ENCODE measurements at regions of chr18 and their contacts with region 1.

Region 1: GRCh38 chr18:48951448-48952286 is 902 bp upstream of the SMAD7 start:
- H3K4me3 ChIP-seq: peak overlapping the region; percentile 91
- H3K27ac ChIP-seq: peak overlapping the region; percentile 100
- H3K4me1 ChIP-seq: peaks cover 18% of the 10 kb centered on the region
- CTCF ChIP-seq: peak; percentile 63; the same call in 1 of the 2 replicates

Region 2: DNA sequence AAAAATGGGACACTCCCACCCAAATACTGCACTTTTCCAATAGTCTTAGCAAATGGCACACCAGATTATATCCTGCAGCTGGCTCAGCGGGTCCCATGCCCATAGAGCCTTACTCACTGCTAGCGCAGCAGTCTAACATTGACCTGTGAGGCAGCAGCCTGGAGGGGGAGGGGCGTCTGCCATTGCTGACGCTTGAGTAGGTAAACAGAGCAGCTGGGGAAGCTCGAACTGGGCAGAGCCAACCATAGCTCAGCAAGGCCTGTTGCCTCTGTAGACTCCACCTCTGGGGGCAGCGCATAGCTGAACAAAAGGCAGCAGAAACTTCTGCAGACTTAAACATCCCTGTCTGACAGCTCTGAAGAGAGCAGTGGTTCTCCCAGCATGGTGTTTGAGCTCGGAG is 302.4 kb before region 1 on chr18:
- CTCF ChIA-PET with region 1: no interaction called
- POLR2A ChIA-PET with region 1: no interaction called
- H3K4me3 ChIP-seq: no peak overlapping the region
- H3K27ac ChIP-seq: no peak overlapping the region
- H3K4me1 ChIP-seq: no peaks in the 10 kb centered on the region
- CTCF ChIP-seq: 0 out of 2 replicates have a peak, but pooled peaks have one; percentile 12

Region 3: DNA sequence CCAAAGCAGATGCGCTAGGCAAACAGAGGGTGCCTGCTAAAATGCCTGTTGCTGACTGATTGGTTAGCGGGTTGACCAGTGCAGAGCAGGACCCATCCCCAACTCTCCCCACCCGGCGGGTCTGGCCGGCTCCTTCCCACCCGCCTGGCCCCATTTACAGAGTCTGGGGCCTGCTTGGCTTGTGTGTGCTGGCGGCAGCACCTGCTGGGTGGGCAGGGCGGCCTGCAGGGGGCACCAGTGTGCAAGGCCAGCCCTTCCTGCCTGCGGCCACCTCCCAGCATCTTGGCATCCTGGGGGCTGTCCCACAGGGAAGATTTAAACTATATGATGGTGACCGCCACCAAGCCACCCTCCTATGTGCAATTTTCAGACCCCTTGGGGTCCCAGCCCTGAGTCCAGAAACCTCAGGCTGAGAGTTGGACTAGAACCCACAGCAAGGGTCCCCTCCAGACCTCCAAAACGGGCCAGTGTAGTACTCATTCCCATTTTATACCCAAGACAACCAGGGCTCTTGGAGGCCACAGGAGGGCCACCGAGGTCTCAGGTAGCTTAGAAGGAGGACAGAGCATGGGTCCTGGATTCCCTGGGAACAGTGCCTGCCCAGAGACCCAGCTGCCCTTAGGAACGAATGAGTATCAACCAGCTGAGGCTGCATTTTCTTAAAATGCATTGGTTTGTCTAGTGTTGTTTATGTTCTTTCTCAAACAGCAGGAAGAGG is 174.5 kb before region 1 on chr18:
- CTCF ChIA-PET with region 1: interaction called, 12 read pairs
- POLR2A ChIA-PET with region 1: interaction called, 4 read pairs
- H3K4me3 ChIP-seq: no peak overlapping the region
- H3K27ac ChIP-seq: peak overlapping the region; percentile 17; the same call in 1 of the 2 replicates
- H3K4me1 ChIP-seq: peaks cover 11% of the 10 kb centered on the region; the same call in 1 of the 2 replicates
- CTCF ChIP-seq: peak; percentile 93

Region 4: GRCh38 chr18:48940854-48941611 is 10.6 kb before region 1 on chr18:
- CTCF ChIA-PET with region 1: interaction called, 4 read pairs
- POLR2A ChIA-PET with region 1: interaction called, 33 read pairs
- H3K4me3 ChIP-seq: peak overlapping the region; percentile 25
- H3K27ac ChIP-seq: peak overlapping the region; percentile 99
- H3K4me1 ChIP-seq: peaks cover 74% of the 10 kb centered on the region
- CTCF ChIP-seq: no peak

Region 5: GRCh38 chr18:48975649-48976204 is 24.1 kb after region 1 on chr18:
- CTCF ChIA-PET with region 1: interaction called, 3 read pairs
- POLR2A ChIA-PET with region 1: interaction called, 39 read pairs
- H3K4me3 ChIP-seq: peak overlapping the region; percentile 41
- H3K27ac ChIP-seq: peak overlapping the region; percentile 97
- H3K4me1 ChIP-seq: peaks cover 12% of the 10 kb centered on the region
- CTCF ChIP-seq: no peak

Region 6: GRCh38 chr18:48997985-48998831 is 46.5 kb after region 1 on chr18:
- CTCF ChIA-PET with region 1: interaction called, 6 read pairs
- POLR2A ChIA-PET with region 1: interaction called, 252 read pairs
- H3K4me3 ChIP-seq: peak overlapping the region; percentile 5
- H3K27ac ChIP-seq: peak overlapping the region; percentile 73
- H3K4me1 ChIP-seq: peaks cover 38% of the 10 kb centered on the region
- CTCF ChIP-seq: no peak

Region 7: DNA sequence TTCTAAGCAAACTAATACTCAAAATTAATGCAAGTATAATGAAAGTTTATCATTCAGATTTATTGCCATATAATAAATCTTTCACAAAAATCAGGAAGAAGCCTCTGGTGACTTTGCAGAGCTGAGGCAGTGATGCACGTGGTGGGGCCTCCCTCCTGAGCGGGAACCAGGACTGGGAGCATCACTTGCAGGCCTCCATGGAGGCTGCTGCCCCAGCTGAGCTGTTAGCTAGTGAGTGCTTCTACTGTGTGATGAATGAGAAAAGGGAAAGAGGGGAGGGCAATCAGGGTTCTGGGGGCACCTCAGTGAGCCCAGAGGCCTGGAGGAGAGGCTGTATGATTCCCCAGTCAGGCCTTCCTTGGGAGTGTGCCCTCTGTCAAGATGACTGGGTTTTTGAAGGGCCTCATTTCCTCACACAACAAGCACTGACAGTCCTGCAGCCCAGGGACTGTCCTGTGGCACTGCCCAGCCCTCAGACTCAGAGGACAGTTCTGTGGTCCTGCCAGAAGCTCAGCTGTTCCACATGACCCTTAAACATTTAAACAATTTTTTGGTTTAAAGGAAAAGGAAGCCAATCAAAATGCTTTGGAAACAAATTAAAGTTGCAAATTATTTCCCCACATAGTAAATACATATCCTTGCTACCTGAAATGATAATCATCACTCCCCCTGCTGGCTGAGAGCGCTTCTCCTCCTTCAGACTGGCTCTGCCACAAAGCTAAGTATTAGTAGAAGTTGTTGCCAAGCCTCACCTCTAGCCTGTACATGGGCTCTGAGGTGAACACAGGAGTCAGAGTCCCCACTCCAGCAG is 90.0 kb after region 1 on chr18:
- CTCF ChIA-PET with region 1: interaction called, 6 read pairs
- POLR2A ChIA-PET with region 1: interaction called, 17 read pairs
- H3K4me3 ChIP-seq: no peak overlapping the region
- H3K27ac ChIP-seq: 0 out of 2 replicates have a peak overlapping the region, but pooled peaks have one; percentile 5
- H3K4me1 ChIP-seq: no peaks in the 10 kb centered on the region
- CTCF ChIP-seq: no peak; the same call in 1 of the 2 replicates

Region 8: DNA sequence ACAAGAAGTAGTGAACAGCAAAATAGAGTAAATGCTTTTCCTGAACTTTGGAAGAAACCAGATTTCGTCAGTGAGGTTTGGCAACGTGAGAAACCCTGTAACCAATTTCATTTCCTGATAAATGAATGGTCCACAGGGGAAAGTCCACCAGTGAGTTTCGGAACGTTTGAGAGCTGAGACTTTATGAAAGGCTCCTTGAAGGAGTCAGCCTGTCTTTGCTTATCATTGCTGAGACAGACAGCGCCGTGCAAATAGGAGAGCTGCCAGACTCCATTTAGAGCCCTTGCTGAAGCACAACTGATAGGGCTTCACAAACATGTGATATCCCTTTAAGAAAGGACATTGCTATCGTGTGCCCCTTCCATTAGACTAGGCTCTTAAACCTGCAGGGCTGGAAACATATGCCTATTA is 120.9 kb after region 1 on chr18:
- CTCF ChIA-PET with region 1: no interaction called
- POLR2A ChIA-PET with region 1: no interaction called
- H3K4me3 ChIP-seq: no peak overlapping the region
- H3K27ac ChIP-seq: no peak overlapping the region
- H3K4me1 ChIP-seq: peaks cover 7% of the 10 kb centered on the region; the same call in 1 of the 2 replicates
- CTCF ChIP-seq: no peak

Region 9: DNA sequence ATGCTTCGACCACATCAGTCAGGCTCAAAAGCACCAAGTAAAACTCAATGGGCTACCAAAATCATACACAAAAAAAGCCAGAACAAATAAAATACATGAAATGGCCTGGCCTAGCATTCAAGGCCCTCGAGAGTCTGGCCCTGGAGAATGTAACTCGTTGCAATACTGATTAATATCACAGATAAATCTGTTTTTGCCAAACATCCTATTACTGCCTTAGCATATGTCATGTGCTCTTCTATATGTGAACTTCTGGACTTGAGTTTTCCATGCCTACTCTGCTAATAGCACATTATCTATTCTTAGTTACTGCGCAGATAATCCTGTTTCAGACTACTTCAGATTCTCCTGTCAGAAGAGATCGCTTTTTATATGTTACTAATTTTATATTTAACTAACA is 249.8 kb after region 1 on chr18:
- CTCF ChIA-PET with region 1: no interaction called
- POLR2A ChIA-PET with region 1: no interaction called
- H3K4me3 ChIP-seq: no peak overlapping the region
- H3K27ac ChIP-seq: no peak overlapping the region
- H3K4me1 ChIP-seq: no peaks in the 10 kb centered on the region
- CTCF ChIP-seq: no peak